PC-9 (cell line): ENCODE measurements at regions of chr2 and their contacts with region 1.

Region 1: DNA sequence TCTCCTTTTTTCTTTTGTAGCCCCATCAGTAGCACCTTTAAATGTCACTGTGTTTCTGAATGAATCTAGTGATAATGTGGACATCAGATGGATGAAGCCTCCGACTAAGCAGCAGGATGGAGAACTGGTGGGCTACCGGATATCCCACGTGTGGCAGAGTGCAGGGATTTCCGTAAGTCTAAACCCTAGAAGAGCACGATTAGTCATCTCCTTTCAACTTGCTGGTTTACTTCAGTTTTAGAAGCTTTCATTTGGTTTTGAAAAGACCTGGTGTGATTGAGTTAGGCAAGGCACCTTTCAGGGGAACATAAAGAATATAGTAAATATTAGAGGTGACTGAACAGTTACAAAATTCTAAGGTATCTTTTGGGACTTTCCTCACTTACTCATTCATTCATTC is 72.2 kb upstream of the TMEM87B start:
- DNase-seq: no peak
- H3K4me3 ChIP-seq: no peak overlapping the region
- H3K27ac ChIP-seq: no peak overlapping the region
- H3K4me1 ChIP-seq: peaks cover 29% of the 10 kb centered on the region
- H3K27me3 ChIP-seq: no peaks in the 10 kb centered on the region
- CTCF ChIP-seq: no peak

Region 2: DNA sequence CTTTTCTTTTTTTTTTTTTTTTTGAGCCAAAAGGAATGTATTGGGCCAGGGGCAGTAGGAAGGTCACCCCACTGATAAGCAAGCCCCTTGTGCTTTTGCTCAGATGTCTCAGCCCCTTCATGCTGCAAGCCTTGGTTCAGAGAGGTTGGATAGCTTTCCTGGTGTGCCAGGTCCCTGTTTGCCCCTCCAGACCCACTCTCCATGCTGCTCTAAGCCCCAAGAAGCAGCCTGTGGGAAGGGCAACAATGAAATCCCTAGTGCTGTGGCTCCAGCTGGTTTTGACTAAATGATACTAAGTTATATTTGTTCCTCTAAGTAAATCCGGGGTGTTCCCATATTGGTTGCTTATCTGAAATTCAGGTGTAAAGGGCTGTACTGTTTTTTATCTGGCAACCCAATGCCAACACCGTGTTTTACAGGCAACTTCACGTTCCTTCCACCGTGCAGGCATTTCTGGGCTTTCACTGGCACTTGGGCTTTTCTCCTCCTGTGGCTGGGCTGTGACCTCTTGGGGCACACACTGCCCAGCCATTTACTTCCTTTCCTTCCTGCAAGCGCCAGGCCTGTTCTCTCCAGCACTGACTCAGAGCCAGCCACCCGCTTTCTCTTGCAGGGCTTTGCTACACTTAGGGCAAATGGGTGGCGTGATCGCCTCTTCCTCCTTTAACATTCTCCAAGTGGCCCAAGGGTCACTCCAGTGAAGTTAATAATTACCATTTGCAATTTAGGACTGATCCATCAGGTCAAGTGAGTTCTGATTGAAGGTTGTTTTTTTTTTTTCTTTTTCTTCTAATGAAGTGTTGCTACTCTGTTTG is 62.8 kb before region 1 on chr2:
- CTCF ChIA-PET with region 1: no interaction called
- POLR2A ChIA-PET with region 1: no interaction called
- intact Hi-C with region 1: loop called (anchors 5 kb)
- DNase-seq: peak; percentile 66 to 91
- H3K4me3 ChIP-seq: no peak overlapping the region
- H3K27ac ChIP-seq: peak overlapping the region; percentile 59
- H3K4me1 ChIP-seq: peaks cover 41% of the 10 kb centered on the region
- H3K27me3 ChIP-seq: no peaks in the 10 kb centered on the region
- CTCF ChIP-seq: no peak

Region 3: GRCh38 chr2:111946294-111947114 is 36.3 kb before region 1 on chr2:
- CTCF ChIA-PET with region 1: no interaction called
- POLR2A ChIA-PET with region 1: no interaction called
- intact Hi-C with region 1: loop called (anchors 2 kb)
- DNase-seq: peak; percentile 74 to 100
- H3K4me3 ChIP-seq: peak overlapping the region; percentile 25; the same call in 1 of the 2 replicates
- H3K27ac ChIP-seq: peak overlapping the region; percentile 92
- H3K4me1 ChIP-seq: peaks cover 28% of the 10 kb centered on the region
- H3K27me3 ChIP-seq: no peaks in the 10 kb centered on the region
- CTCF ChIP-seq: no peak

Region 4: GRCh38 chr2:112048887-112049286 is 66.1 kb after region 1 on chr2:
- CTCF ChIA-PET with region 1: no interaction called
- POLR2A ChIA-PET with region 1: no interaction called
- intact Hi-C with region 1: no loop called
- DNase-seq: peak; percentile 33 to 68
- H3K4me3 ChIP-seq: no peak overlapping the region
- H3K27ac ChIP-seq: no peak overlapping the region
- H3K4me1 ChIP-seq: peaks cover 7% of the 10 kb centered on the region
- H3K27me3 ChIP-seq: no peaks in the 10 kb centered on the region
- CTCF ChIP-seq: peak; percentile 89